ENCODE measurements at regions of chr12 and their contacts with region 1.

Region 1: DNA sequence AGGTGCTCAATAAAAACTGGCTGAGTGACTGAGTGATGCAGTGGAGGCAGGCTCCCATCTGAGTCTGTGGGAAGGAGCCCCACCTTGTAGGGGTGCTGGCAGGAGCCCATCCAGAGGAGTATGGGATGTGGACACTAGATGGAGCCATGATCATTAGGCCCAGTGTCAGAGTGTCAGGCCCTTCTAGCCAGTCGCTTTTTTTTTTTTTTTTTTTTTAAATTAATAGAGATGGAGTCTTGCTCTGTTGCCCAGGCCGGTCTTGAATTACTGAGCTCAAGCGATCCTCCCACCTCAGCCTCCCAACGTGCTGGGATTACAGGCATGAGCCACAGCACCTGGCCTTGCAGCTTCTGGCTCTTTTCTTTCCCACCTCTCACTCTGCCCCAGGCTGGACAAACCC is 11.5 kb downstream of the RITA1 start:
- DNase-seq: peak; percentile 59 to 68 (median 62)
- H3K4me3 ChIP-seq: no peak overlapping the region
- H3K4me3 Mint-ChIP-seq: no peak overlapping the region
- H3K27ac ChIP-seq: no peak overlapping the region
- H3K27ac Mint-ChIP-seq: peak overlapping the region in 2 of 7 donors; percentile 46 to 73
- H3K4me1 ChIP-seq: no peaks in the 10 kb centered on the region
- H3K4me1 Mint-ChIP-seq: peaks cover 0 to 4% (median 4%) of the 10 kb centered on the region in 4 donors
- H3K27me3 ChIP-seq: no peaks in the 10 kb centered on the region
- H3K27me3 Mint-ChIP-seq: no peaks in the 10 kb centered on the region

Region 2: DNA sequence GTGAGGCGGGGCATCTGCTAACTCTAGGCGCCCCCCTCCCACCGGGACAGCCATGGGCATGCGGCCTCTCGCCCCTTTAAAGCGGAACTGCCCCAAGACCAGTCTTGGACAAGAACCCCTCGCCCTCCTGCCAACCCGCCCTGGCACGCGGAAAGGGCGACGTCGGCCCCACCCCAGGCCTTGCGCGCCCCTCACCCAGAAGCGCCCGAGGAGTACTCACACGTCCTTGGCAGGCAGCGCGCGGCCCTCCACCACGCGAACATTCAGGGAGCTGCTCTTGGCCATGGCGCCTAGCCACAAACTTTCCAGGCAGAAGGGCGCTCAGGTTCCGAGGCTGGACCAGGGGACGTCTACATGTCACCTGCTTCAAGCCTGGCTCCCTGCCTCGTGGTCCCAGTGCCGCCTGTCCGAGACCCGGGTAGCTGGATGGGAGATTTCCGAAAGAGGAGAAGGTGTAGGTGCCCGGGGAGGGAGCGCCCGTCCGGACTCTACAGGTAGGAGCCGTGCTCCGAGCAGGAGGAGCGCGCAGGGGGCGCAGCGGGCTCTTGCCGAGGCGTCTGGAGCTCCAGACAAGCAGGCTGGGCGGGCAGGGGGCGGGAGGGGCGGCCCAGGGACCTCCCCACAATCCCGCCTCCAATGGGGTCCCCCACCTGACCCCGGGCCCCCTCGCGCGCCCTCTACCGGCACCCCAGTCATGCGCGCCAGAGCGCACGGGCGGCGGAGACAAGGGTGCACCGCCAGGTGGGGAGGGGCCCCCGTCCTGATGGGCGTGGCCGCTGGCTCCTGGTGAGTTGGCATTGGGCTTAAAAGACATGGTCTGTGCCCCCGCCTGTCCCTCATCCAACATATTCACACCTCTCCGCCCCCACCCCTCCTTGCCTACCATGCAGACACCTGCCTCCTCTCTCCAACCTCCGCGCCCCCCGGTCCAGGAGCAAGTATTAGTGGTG is 61.5 kb before region 1 on chr12 and contains the start of gene RASAL1:
- CTCF ChIA-PET with region 1: no interaction called
- POLR2A ChIA-PET with region 1: no interaction called
- intact Hi-C with region 1: no loop called
- DNase-seq: peak; percentile 65 to 83 (median 70)
- H3K4me3 ChIP-seq: peak within 1 kb of the TSS; percentile 34
- H3K4me3 Mint-ChIP-seq: peak within 1 kb of the TSS; percentile 56 to 90 (median 80)
- H3K27ac ChIP-seq: no peak within 1 kb of the TSS
- H3K27ac Mint-ChIP-seq: peak within 1 kb of the TSS; percentile 26 to 91 (median 84)
- H3K4me1 ChIP-seq: peaks cover 20% of the 10 kb centered on the region
- H3K4me1 Mint-ChIP-seq: peaks cover 4 to 19% (median 11%) of the 10 kb centered on the region in 4 donors
- H3K27me3 ChIP-seq: no peaks in the 10 kb centered on the region
- H3K27me3 Mint-ChIP-seq: peaks cover 3% of the 10 kb centered on the region in 2 donors
- total RNA-seq, gene RASAL1: 0.58 to 1.4 TPM

Region 3: DNA sequence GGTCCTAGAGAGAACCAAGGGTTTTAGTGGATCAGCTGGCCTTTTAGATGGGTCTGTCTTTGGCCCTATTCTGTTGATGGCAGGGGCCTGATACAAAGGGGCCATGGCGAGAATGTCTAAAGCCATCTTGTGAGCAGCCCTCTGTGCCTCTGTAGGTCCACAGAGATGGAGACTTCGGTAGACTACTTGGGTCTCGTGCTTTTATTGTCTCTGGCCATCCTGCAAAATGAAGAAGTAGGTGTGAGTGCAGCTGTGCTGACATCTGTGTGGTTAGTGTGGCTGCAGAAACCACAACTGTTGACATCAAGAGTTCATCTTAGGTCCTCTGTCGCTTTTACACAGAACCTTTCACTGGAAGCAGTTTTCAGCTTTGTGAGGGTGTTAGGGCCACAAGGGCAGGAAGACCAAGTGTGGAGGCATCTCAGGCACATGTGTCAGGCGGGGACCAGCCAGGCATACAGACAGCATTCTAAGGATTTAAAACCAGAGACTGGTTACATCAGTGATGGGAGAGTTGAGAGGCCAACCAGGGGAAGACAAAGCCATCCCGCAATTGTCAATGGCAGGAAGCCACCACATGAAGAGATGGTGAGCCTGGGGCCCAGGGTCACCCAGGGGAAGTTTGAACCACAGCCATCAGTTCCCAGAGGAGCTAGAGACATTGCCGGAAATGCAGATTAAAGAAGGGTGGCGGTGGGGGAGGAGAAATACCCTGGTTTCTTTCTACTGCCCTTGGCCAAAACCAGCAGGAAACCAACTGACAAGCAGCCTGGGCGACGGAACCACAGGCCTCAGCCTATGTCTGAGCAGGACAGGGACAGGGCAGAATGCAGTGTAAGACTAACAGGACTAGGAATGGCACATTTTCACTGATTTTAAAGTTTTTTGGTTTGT is 11.3 kb after region 1 on chr12:
- CTCF ChIA-PET with region 1: interaction called, 7 read pairs
- POLR2A ChIA-PET with region 1: interaction called, 14 read pairs
- intact Hi-C with region 1: no loop called
- DNase-seq: peak; percentile 68 to 78 (median 73)
- H3K4me3 ChIP-seq: no peak overlapping the region
- H3K4me3 Mint-ChIP-seq: peak overlapping the region; percentile 26 to 83 (median 74)
- H3K27ac ChIP-seq: peak overlapping the region; percentile 40
- H3K27ac Mint-ChIP-seq: peak overlapping the region; percentile 87 to 97 (median 93)
- H3K4me1 ChIP-seq: peaks cover 47% of the 10 kb centered on the region
- H3K4me1 Mint-ChIP-seq: peaks cover 24 to 54% (median 40%) of the 10 kb centered on the region in 4 donors
- H3K27me3 ChIP-seq: no peaks in the 10 kb centered on the region
- H3K27me3 Mint-ChIP-seq: no peaks in the 10 kb centered on the region

Region 4: GRCh38 chr12:113232840-113233585 is 36.0 kb after region 1 on chr12:
- CTCF ChIA-PET with region 1: interaction called, 5 read pairs
- POLR2A ChIA-PET with region 1: interaction called, 3 read pairs
- intact Hi-C with region 1: loop called (anchors 1 kb)
- DNase-seq: peak; percentile 56 to 86 (median 70)
- H3K4me3 ChIP-seq: no peak overlapping the region
- H3K4me3 Mint-ChIP-seq: peak overlapping the region; percentile 72 to 91 (median 82)
- H3K27ac ChIP-seq: peak overlapping the region; percentile 8
- H3K27ac Mint-ChIP-seq: peak overlapping the region; percentile 16 to 94 (median 82)
- H3K4me1 ChIP-seq: peaks cover 62% of the 10 kb centered on the region
- H3K4me1 Mint-ChIP-seq: peaks cover 26 to 65% (median 40%) of the 10 kb centered on the region in 4 donors
- H3K27me3 ChIP-seq: no peaks in the 10 kb centered on the region
- H3K27me3 Mint-ChIP-seq: no peaks in the 10 kb centered on the region

Region 5: DNA sequence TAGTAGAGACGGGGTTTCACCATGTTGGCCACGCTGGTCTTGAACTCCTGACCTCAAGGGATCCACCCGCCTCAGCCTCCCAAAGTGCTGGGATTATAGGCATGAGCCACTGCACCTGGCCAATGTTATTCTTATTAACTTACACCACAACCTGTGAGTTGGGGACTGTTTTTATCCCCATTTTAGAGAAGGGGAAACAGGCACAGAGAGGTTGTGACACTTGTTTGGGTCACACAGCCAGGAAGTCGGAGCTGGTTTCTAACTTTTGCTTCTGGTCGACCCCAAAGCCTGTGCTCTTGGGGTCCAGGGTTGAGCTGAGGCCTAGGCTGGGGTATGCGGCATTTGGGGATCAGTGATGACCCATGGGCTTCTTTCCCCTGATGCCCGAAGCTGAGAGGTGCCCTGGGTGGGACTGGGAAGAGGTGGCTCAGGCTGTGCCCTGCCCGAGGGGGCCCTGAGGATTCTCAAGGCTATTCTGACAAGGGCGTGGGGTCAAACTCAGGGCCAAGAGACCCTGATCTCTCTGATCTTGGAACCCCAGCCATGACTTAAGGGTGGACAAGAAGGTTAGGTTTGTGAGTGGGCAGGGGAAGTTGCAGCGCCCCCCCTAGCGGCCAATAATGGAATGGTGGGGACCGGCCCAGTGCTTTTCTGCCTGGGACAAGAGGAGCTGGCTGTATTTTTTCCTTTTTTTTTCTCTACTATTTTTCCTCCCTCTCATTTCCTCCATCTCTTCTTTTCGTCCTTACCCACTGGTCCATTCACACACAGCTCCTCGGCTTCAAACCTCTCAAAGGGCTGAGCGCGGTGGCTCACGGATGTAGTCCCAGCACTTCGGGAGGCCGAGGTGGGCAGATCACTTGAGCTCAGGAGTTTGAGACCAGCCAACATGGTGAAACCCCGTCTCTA is 228.2 kb after region 1 on chr12:
- CTCF ChIA-PET with region 1: interaction called, 28 read pairs
- POLR2A ChIA-PET with region 1: no interaction called
- intact Hi-C with region 1: no loop called
- DNase-seq: peak; percentile 30 to 43 (median 35)
- H3K4me3 ChIP-seq: no peak overlapping the region
- H3K4me3 Mint-ChIP-seq: no peak overlapping the region
- H3K27ac ChIP-seq: no peak overlapping the region
- H3K27ac Mint-ChIP-seq: no peak overlapping the region
- H3K4me1 ChIP-seq: no peaks in the 10 kb centered on the region
- H3K4me1 Mint-ChIP-seq: peaks cover 0 to 13% (median 0%) of the 10 kb centered on the region in 4 donors
- H3K27me3 ChIP-seq: no peaks in the 10 kb centered on the region
- H3K27me3 Mint-ChIP-seq: peaks cover 6 to 11% of the 10 kb centered on the region in 2 donors

Measured in CD4-positive, alpha-beta memory T cell (primary cell).